Dorsolateral prefrontal cortex (tissue), 120 donors: ENCODE measurements at regions of chr7 and their contacts with region 1.

Region 1: GRCh38 chr7:127885843-127886242 is 145.4 kb downstream of the LRRC4 start:
- DNase-seq: peak in 8 of 10 donors; percentile 45 to 81 (median 58)
- H3K4me3 ChIP-seq: peak overlapping the region in 1 of 59 donors; percentile 9
- H3K27ac ChIP-seq: peak overlapping the region in 56 of 59 donors; percentile 3 to 87 (median 70)
- H3K27me3 ChIP-seq: no peaks in the 10 kb centered on the region
- CTCF ChIP-seq: no peak

Region 2: GRCh38 chr7:127726476-127726875 is 159.4 kb before region 1 on chr7:
- intact Hi-C with region 1: loop called in 1 of 2 experiments (anchors 10 kb)
- DNase-seq: no peak
- H3K4me3 ChIP-seq: no peak overlapping the region
- H3K27ac ChIP-seq: no peak overlapping the region
- H3K27me3 ChIP-seq: no peaks in the 10 kb centered on the region
- CTCF ChIP-seq: no peak

Region 3: DNA sequence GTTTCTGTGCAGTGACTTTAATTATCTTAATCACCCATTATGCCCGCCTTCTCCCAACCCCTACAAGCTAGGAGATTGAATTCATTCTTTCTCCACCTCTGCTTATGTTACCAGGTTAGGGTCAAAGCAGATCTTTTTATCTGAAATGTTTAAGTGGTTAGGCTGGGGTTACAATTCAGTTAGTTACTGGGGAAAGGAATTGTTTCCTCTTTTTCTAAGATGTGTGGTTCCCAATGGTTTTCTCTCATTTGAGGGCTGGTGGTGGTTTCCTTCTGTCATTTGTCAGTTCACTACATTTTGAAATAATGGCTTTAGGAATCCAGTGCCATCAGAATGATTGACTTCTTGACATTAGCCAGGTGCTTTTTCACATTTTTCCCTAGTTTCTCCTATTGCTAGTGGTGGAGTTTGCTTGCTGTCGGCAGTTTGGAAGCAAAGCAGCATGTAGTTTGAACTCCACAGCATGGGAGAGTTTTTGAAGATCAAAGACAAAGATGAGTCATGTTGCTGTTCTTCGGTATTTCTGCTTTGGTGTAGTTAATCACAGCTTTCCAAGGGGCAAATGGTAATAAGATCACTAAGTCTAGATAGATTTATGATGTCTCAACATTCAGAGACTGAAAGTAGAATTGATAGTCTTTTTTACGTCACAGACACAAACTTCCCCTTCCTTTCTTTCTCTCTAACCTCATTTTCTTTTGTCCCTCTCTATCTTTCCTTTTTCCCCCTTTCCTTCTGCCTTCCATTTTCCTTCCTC is 65.7 kb before region 1 on chr7:
- intact Hi-C with region 1: no loop called
- DNase-seq: no peak
- H3K4me3 ChIP-seq: no peak overlapping the region
- H3K27ac ChIP-seq: peak overlapping the region in 47 of 59 donors; percentile 1 to 82 (median 62)
- H3K27me3 ChIP-seq: no peaks in the 10 kb centered on the region
- CTCF ChIP-seq: no peak

Region 4: GRCh38 chr7:127938588-127938987 is 52.7 kb after region 1 on chr7:
- intact Hi-C with region 1: loop called in 1 of 2 experiments (anchors 5 kb)
- DNase-seq: peak in 1 of 10 donors; percentile 28
- H3K4me3 ChIP-seq: no peak overlapping the region
- H3K27ac ChIP-seq: peak overlapping the region in 4 of 59 donors; percentile 3 to 25 (median 11)
- H3K27me3 ChIP-seq: no peaks in the 10 kb centered on the region
- CTCF ChIP-seq: peak in 2 of 56 donors; percentile 8 to 10

Region 5: DNA sequence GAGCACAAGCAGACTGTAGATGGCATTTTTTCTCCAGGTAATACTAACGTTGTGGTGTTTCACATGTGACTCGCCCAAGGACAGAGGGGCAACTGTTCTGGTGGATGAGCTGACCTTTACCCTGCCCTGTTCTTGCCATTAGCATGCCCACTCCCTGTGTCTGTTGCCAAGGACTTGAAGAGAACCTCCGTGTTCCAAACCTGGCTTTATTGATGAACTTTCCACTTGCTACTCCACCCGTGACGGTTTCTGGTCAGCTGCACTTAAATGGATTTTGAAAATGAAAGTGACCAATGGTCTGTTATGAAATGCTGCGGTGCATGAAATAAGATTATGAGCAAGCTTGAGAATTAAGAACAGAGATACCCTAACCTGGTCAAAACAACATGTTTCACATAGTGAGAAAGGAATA is 115.0 kb after region 1 on chr7:
- intact Hi-C with region 1: no loop called
- DNase-seq: no peak
- H3K4me3 ChIP-seq: no peak overlapping the region
- H3K27ac ChIP-seq: peak overlapping the region in 26 of 59 donors; percentile 1 to 64 (median 36)
- H3K27me3 ChIP-seq: no peaks in the 10 kb centered on the region
- CTCF ChIP-seq: no peak